Stomach (tissue), 19 donors: ENCODE measurements at regions of chr13 and their contacts with region 1.

Region 1: DNA sequence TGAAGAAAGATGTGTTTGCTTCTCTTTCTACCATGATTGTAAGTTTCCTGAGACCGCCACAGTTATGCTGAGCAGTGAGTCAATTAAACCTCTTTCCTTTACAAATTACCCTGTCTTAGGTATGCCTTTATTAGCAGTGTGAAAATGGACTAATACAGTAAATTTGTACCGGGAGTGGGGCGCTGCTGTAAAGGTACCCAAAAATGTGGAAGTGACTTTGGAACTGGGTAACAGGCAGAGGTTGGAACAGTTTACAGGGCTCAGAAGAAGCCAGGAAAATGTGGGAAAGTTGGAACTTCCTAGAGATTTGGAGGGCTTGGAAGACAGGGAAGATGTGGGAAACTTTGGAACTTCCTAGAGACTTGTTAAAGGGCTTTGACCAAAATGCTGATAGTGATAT is 9.2 kb upstream of the PDS5B start:
- DNase-seq: no peak
- H3K4me3 ChIP-seq: no peak overlapping the region
- H3K27ac ChIP-seq: no peak overlapping the region
- H3K4me1 ChIP-seq: no peaks in the 10 kb centered on the region
- H3K27me3 ChIP-seq: no peaks in the 10 kb centered on the region
- CTCF ChIP-seq: no peak
- EP300 ChIP-seq: no peak
- POLR2A ChIP-seq: no peak

Region 2: GRCh38 chr13:32381539-32381938 is 195.5 kb before region 1 on chr13:
- intact Hi-C with region 1: loop called (anchors 10 kb)
- DNase-seq: peak in 1 of 2 donors; percentile 66
- H3K4me3 ChIP-seq: no peak overlapping the region
- H3K27ac ChIP-seq: no peak overlapping the region
- H3K4me1 ChIP-seq: no peaks in the 10 kb centered on the region
- H3K27me3 ChIP-seq: no peaks in the 10 kb centered on the region
- CTCF ChIP-seq: peak in 5 of 7 experiments; percentile 8 to 52 (median 28)
- EP300 ChIP-seq: no peak
- POLR2A ChIP-seq: no peak

Region 3: DNA sequence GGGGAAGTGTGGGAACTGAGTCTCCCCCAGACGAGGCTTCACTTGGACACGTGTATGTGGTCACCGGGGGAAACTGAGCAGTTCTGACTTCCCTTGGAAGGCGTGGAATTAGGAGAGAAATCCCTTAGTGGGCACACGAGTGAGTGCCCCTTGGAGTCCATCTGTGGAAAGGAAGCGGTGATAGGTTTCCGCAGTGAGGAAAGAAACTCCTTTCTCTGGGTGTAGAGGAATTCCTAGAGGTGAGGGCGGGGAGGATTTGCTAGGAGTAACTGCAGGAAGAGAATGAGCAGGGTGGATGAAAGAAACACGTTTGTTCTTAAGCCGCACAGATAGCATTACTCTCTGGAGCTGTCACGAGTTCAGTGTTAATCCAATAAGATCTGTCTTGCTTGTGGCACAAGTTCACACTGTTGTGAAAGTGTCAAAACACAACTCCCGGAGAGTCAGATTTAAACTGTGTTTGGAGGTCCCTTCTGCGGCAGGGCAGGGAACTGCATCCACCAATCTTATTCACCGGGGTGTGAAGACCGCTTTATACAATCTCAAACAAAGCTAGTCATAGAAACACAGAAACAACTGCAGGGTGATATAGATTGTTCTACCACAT is 440.4 kb after region 1 on chr13:
- intact Hi-C with region 1: no loop called
- DNase-seq: peak; percentile 59 to 83
- H3K4me3 ChIP-seq: peak overlapping the region; percentile 52 to 78 (median 62)
- H3K27ac ChIP-seq: peak overlapping the region; percentile 51 to 85 (median 80)
- H3K4me1 ChIP-seq: peaks cover 0 to 26% (median 21%) of the 10 kb centered on the region in 4 donors
- H3K27me3 ChIP-seq: peaks cover 0 to 25% (median 5%) of the 10 kb centered on the region in 3 donors
- CTCF ChIP-seq: peak in 5 of 7 experiments; percentile 63 to 72 (median 65)
- EP300 ChIP-seq: no peak
- POLR2A ChIP-seq: no peak